ENCODE measurements at regions of chr3 and their contacts with region 1.

Region 1: DNA sequence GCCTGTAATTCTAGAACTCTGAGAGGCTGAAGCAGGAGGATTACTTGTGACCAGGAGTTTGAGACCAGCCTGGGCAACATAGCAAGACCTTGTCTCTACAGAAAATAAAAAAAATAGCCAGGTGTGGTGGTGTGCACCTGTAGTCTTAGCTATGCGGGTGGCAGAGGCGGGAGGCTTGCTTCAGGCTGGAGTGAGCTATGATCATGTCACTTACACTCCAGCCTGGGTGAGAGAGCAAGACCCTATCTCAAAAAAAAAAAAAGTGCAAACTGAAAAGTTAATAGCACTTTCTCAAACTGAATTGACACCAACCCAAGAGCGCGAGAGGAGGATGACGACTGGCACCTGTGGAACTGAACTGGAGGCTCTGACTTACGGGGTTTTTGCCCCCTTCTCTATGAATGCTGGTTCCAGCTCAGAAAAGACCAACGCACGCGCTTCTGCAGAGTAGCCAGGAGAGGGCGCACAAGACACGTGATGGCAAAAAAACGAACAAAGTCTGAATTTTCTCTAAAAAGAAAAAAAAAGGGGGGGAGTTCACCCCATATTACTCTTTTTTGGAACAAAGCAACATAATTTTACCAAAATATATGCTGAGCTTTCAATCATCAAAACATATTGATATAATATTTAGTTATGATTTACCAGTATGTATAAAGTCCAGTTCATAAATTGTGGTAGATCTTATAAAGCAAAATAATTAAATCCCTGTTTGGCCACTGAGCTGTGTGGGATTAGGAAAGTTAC is 23.7 kb downstream of the CFAP92 start:
- DNase-seq: peak; percentile 55
- H3K4me3 ChIP-seq: no peak overlapping the region
- H3K27ac ChIP-seq: no peak overlapping the region
- H3K4me1 ChIP-seq: no peaks in the 10 kb centered on the region
- H3K27me3 ChIP-seq: no peaks in the 10 kb centered on the region
- CTCF ChIP-seq: peak; percentile 80 to 89
- POLR2A ChIP-seq: no peak

Region 2: GRCh38 chr3:128650096-128651050 is 319.8 kb before region 1 on chr3 and contains the start of gene RPN1:
- CTCF ChIA-PET with region 1: no interaction called
- POLR2A ChIA-PET with region 1: no interaction called
- dilution Hi-C with region 1: no loop called
- intact Hi-C with region 1: no loop called
- DNase-seq: peak; percentile 97
- H3K4me3 ChIP-seq: peak within 1 kb of the TSS; percentile 92 to 99 (median 96)
- H3K27ac ChIP-seq: peak within 1 kb of the TSS; percentile 95
- H3K4me1 ChIP-seq: peaks cover 8% of the 10 kb centered on the region
- H3K27me3 ChIP-seq: no peaks in the 10 kb centered on the region
- CTCF ChIP-seq: no peak
- POLR2A ChIP-seq: peak; percentile 89
- total RNA-seq, gene RPN1: 244 and 250 TPM in 2 replicates

Region 3: DNA sequence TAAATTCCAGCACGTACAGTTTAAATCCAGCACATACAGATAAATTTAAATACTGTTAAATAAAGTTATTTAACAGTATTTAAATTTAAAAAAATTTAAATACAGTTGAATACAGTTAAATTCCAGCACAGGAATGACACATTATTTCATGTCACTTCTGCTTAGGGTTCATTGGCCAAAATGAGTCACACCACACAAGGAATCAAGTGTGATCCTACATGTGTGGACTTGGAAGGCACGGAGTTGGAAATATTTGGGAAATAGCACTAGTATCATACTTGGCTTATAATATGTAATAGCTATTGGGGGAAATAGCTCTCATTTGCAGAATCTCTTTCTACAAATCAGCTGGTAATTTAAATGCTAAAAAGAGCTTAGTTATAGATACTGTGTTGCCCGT is 233.6 kb before region 1 on chr3:
- CTCF ChIA-PET with region 1: no interaction called
- POLR2A ChIA-PET with region 1: no interaction called
- dilution Hi-C with region 1: no loop called
- intact Hi-C with region 1: no loop called
- DNase-seq: no peak
- H3K4me3 ChIP-seq: no peak overlapping the region
- H3K27ac ChIP-seq: no peak overlapping the region
- H3K4me1 ChIP-seq: no peaks in the 10 kb centered on the region
- H3K27me3 ChIP-seq: no peaks in the 10 kb centered on the region
- CTCF ChIP-seq: no peak
- POLR2A ChIP-seq: no peak

Region 4: DNA sequence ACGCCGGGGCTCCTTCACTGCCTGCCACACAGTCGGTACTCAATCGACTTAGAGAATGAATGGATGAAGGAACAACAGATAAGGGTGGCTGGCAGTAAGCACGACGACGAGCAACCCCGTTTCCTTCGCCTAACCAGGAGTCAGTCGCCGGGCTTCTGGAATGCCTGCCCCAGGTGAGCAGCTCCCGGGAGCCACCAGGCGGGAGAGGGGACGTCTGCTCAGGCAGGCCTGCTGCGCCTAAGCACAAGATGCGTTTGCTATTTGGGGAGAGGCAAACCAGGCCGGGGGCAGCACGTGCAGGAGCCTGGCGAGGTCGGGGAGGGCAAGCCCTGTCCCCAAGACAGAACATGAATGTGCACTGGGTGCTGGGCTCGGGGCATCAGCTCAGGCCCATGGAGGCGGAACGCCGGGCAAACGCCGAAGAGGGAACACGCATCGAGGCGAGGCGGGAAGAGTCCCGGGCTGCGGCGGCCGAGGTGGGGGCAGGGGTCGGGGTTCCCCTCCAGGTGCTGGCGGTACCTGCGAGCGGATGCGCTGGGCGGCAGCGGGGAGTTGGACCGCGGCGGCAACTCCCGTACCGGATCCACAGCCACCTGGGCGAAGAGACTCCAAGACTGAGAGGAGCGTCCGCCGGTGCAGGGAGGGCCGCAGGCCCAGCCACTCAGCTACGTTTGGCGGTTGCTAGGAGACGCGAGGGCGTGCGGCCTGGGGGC is 23.5 kb after region 1 on chr3 and contains the start of gene CFAP92:
- CTCF ChIA-PET with region 1: interaction called, 36 read pairs
- POLR2A ChIA-PET with region 1: interaction called, 3 read pairs
- dilution Hi-C with region 1: no loop called
- intact Hi-C with region 1: no loop called
- DNase-seq: no peak
- H3K4me3 ChIP-seq: peak within 1 kb of the TSS in 2 of 3 experiments; percentile 1 to 39
- H3K27ac ChIP-seq: no peak within 1 kb of the TSS
- H3K4me1 ChIP-seq: peaks cover 6% of the 10 kb centered on the region
- H3K27me3 ChIP-seq: peaks cover 0 to 10% of the 10 kb centered on the region in 2 experiments
- CTCF ChIP-seq: no peak
- POLR2A ChIP-seq: no peak
- total RNA-seq, gene CFAP92: 0.21 and 0.62 TPM in 2 replicates

Region 5: GRCh38 chr3:129040579-129041300 is 70.6 kb after region 1 on chr3:
- CTCF ChIA-PET with region 1: interaction called, 18 read pairs
- POLR2A ChIA-PET with region 1: no interaction called
- dilution Hi-C with region 1: no loop called
- intact Hi-C with region 1: no loop called
- DNase-seq: no peak
- H3K4me3 ChIP-seq: no peak overlapping the region
- H3K27ac ChIP-seq: no peak overlapping the region
- H3K4me1 ChIP-seq: peaks cover under 1% of the 10 kb centered on the region
- H3K27me3 ChIP-seq: no peaks in the 10 kb centered on the region
- CTCF ChIP-seq: no peak
- POLR2A ChIP-seq: no peak

Region 6: GRCh38 chr3:129095285-129095684 is 125.1 kb after region 1 on chr3:
- CTCF ChIA-PET with region 1: interaction called, 21 read pairs
- POLR2A ChIA-PET with region 1: no interaction called
- dilution Hi-C with region 1: no loop called
- intact Hi-C with region 1: no loop called
- DNase-seq: no peak
- H3K4me3 ChIP-seq: no peak overlapping the region
- H3K27ac ChIP-seq: no peak overlapping the region
- H3K4me1 ChIP-seq: no peaks in the 10 kb centered on the region
- H3K27me3 ChIP-seq: no peaks in the 10 kb centered on the region
- CTCF ChIP-seq: no peak
- POLR2A ChIP-seq: no peak

Region 7: DNA sequence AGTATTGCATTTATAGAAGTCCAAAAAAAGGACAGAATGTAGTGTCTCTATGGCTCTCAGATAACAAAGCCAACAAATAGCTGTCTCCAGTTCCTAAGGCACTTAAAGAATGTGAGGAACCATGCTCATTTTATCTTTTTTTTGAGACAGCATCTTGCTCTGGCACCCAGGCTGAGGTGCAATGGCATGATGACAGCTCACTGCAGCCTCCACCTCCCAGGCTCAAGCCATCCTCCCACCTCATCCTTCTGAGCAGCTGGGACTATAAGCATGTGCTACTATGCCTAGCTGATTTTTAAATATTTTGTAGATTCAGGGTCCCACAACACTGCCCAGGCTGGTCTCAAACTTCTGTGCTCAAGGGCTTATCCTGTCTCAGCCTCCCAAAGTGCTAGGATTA is 174.6 kb after region 1 on chr3:
- CTCF ChIA-PET with region 1: interaction called, 32 read pairs
- POLR2A ChIA-PET with region 1: no interaction called
- dilution Hi-C with region 1: no loop called
- intact Hi-C with region 1: no loop called
- DNase-seq: no peak
- H3K4me3 ChIP-seq: no peak overlapping the region
- H3K27ac ChIP-seq: no peak overlapping the region
- H3K4me1 ChIP-seq: no peaks in the 10 kb centered on the region
- H3K27me3 ChIP-seq: no peaks in the 10 kb centered on the region
- CTCF ChIP-seq: no peak
- POLR2A ChIP-seq: no peak

Region 8: GRCh38 chr3:129316131-129317013 is 346.2 kb after region 1 on chr3:
- CTCF ChIA-PET with region 1: interaction called, 26 read pairs
- POLR2A ChIA-PET with region 1: no interaction called
- dilution Hi-C with region 1: no loop called
- intact Hi-C with region 1: no loop called
- DNase-seq: peak; percentile 78
- H3K4me3 ChIP-seq: peak overlapping the region; percentile 51 to 90 (median 68)
- H3K27ac ChIP-seq: peak overlapping the region; percentile 76
- H3K4me1 ChIP-seq: peaks cover 4% of the 10 kb centered on the region
- H3K27me3 ChIP-seq: no peaks in the 10 kb centered on the region
- CTCF ChIP-seq: peak; percentile 52 to 63
- POLR2A ChIP-seq: peak; percentile 100